ENCODE measurements at regions of chr12 and their contacts with region 1.

Region 1: DNA sequence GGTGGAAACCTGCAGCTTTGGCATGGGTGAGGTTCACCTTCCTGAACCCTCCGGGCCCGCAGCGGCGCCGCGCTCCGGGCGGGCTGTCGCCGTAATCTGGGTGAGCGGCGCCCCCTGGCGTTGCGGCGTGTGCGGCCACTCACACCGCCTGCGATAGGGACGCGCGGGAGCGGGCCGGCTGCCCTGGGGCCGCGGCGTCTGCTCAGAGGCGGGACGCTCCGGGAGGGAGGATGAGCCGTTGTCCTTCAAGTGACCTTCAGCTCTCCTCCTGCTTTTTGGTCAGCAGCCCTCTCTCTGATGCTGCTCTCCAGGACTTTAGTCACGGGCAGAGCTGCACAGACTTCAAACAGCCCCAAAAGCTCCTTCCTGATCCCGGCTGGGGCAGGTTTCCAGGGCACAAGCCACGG is 211.7 kb upstream of the FKBP4 start:
- DNase-seq: peak; percentile 36
- ATAC-seq: no peak
- H3K4me3 ChIP-seq: no peak overlapping the region
- H3K4me3 Mint-ChIP-seq: no peak overlapping the region
- H3K27ac ChIP-seq: no peak overlapping the region
- H3K27ac Mint-ChIP-seq: no peak overlapping the region
- H3K4me1 ChIP-seq: no peaks in the 10 kb centered on the region
- H3K4me1 Mint-ChIP-seq: peaks cover 3% of the 10 kb centered on the region
- H3K27me3 ChIP-seq: peaks cover 0 to 20% (median 5%) of the 10 kb centered on the region in 4 experiments
- H3K27me3 Mint-ChIP-seq: peaks cover 41% of the 10 kb centered on the region
- CTCF ChIP-seq: peak; percentile 59

Region 2: GRCh38 chr12:2057041-2057794 is 525.9 kb before region 1 on chr12:
- CTCF ChIA-PET with region 1: no interaction called
- POLR2A ChIA-PET with region 1: no interaction called
- intact Hi-C with region 1: loop called (anchors 5 kb)
- DNase-seq: peak; percentile 37
- ATAC-seq: no peak
- H3K4me3 ChIP-seq: no peak overlapping the region
- H3K4me3 Mint-ChIP-seq: no peak overlapping the region
- H3K27ac ChIP-seq: no peak overlapping the region
- H3K27ac Mint-ChIP-seq: no peak overlapping the region
- H3K4me1 ChIP-seq: peaks cover 8 to 15% of the 10 kb centered on the region in 2 donors
- H3K4me1 Mint-ChIP-seq: peaks cover 12% of the 10 kb centered on the region
- H3K27me3 ChIP-seq: peaks cover 0 to 45% (median 19%) of the 10 kb centered on the region in 4 experiments
- H3K27me3 Mint-ChIP-seq: peaks cover 64% of the 10 kb centered on the region
- CTCF ChIP-seq: peak; percentile 55

Measured in B cell (primary cell).